ENCODE measurements at regions of chr2 and their contacts with region 1.

Region 1: GRCh38 chr2:159286709-159287441 is 372 bp upstream of the WDSUB1 start:
- DNase-seq: peak; percentile 98
- ATAC-seq: peak; percentile 91
- H3K4me3 ChIP-seq: peak overlapping the region; percentile 96
- H3K27ac ChIP-seq: 0 out of 2 replicates have a peak overlapping the region, but pooled peaks have one; percentile 4
- H3K4me1 ChIP-seq: peaks cover 17% of the 10 kb centered on the region; the same call in 1 of the 2 replicates
- H3K27me3 ChIP-seq: no peaks in the 10 kb centered on the region
- CTCF ChIP-seq: no peak

Region 2: DNA sequence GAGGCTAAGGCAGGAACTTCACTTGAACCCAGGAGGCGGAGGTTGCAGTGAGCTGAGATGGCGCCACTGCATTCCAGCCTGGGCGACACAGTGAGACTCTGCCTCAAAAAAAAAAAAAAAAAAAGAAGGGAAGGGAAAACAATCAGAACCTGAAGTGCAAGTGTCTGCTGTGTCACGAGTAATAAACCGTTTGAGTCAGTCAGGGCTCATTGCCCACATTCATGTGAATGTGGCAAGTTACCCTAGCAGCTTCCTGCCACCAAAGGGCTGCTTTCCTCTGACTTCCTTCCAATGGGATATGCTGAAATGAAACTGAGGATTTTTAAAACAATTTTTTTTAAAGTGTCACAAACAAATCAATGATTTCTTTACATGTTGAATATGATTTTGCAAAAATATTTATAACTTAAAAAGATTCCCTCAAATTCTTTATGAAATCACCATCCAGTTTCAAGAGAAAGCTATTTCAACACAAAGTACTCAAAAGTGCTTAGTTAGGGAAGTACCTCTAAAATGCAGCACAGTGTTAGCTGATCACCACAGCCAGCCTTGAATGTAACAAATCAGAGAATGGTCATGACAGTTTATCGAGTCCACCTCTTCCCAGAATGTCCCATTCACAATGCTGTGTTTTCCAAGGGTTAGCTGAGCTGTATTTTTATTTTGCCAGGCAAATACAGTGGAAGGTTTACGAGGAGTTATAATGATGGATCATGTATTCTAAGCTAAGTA is 36.7 kb before region 1 on chr2:
- CTCF ChIA-PET with region 1: no interaction called
- POLR2A ChIA-PET with region 1: no interaction called
- intact Hi-C with region 1: loop called (anchors 1 kb)
- DNase-seq: peak; percentile 96
- ATAC-seq: peak; percentile 97
- H3K4me3 ChIP-seq: peak overlapping the region; percentile 14; the same call in 1 of the 2 replicates
- H3K27ac ChIP-seq: peak overlapping the region; percentile 62
- H3K4me1 ChIP-seq: peaks cover 12% of the 10 kb centered on the region
- H3K27me3 ChIP-seq: no peaks in the 10 kb centered on the region
- CTCF ChIP-seq: no peak